CD8-positive, alpha-beta memory T cell (primary cell): ENCODE measurements at regions of chr6 and their contacts with region 1.

Region 1: GRCh38 chr6:47787620-47788497 is 6.0 kb downstream of the OPN5 start:
- DNase-seq: peak; percentile 20 to 62 (median 33)
- H3K4me3 ChIP-seq: no peak overlapping the region
- H3K4me3 Mint-ChIP-seq: peak overlapping the region in 3 of 7 donors; percentile 7 to 41 (median 18)
- H3K27ac ChIP-seq: no peak overlapping the region
- H3K27ac Mint-ChIP-seq: peak overlapping the region in 1 of 8 donors; percentile 8
- H3K4me1 ChIP-seq: peaks cover 6% of the 10 kb centered on the region
- H3K4me1 Mint-ChIP-seq: peaks cover 3 to 7% (median 6%) of the 10 kb centered on the region in 3 donors
- H3K27me3 ChIP-seq: no peaks in the 10 kb centered on the region
- H3K27me3 Mint-ChIP-seq: peaks cover 21 to 39% of the 10 kb centered on the region in 2 donors

Region 2: GRCh38 chr6:47669684-47670513 is 118.0 kb before region 1 on chr6:
- CTCF ChIA-PET with region 1: no interaction called
- POLR2A ChIA-PET with region 1: no interaction called
- DNase-seq: no peak
- H3K4me3 ChIP-seq: no peak overlapping the region
- H3K4me3 Mint-ChIP-seq: no peak overlapping the region
- H3K27ac ChIP-seq: no peak overlapping the region
- H3K27ac Mint-ChIP-seq: no peak overlapping the region
- H3K4me1 ChIP-seq: no peaks in the 10 kb centered on the region
- H3K4me1 Mint-ChIP-seq: no peaks in the 10 kb centered on the region
- H3K27me3 ChIP-seq: peaks cover 5% of the 10 kb centered on the region
- H3K27me3 Mint-ChIP-seq: peaks cover 23 to 45% of the 10 kb centered on the region in 2 donors

Region 3: DNA sequence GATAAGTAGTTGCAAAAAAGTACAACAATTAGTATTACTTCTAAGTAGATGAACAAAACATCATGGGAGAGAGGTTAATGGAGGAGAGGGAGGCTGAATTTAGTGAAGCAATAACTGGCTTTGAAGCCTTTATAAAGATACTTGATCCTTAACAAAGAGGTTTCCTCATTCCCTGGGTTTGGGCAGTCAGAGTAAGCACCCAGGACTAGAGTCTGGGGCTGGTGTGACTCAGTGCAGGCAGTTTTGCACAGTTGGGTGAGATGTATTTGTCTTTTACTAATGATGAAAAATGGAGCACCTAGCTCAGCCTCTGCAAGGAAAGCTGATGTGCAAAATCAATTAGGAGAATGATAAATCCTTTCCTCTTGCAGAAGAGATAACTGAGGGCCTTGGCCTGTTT is 17.9 kb before region 1 on chr6:
- CTCF ChIA-PET with region 1: no interaction called
- POLR2A ChIA-PET with region 1: no interaction called
- DNase-seq: no peak
- H3K4me3 ChIP-seq: no peak overlapping the region
- H3K4me3 Mint-ChIP-seq: no peak overlapping the region
- H3K27ac ChIP-seq: no peak overlapping the region
- H3K27ac Mint-ChIP-seq: no peak overlapping the region
- H3K4me1 ChIP-seq: no peaks in the 10 kb centered on the region
- H3K4me1 Mint-ChIP-seq: no peaks in the 10 kb centered on the region
- H3K27me3 ChIP-seq: no peaks in the 10 kb centered on the region
- H3K27me3 Mint-ChIP-seq: peaks cover 3 to 21% of the 10 kb centered on the region in 2 donors

Region 4: GRCh38 chr6:47804821-47805220 is 17.0 kb after region 1 on chr6:
- CTCF ChIA-PET with region 1: interaction called, 15 read pairs
- POLR2A ChIA-PET with region 1: no interaction called
- DNase-seq: no peak
- H3K4me3 ChIP-seq: no peak overlapping the region
- H3K4me3 Mint-ChIP-seq: no peak overlapping the region
- H3K27ac ChIP-seq: no peak overlapping the region
- H3K27ac Mint-ChIP-seq: no peak overlapping the region
- H3K4me1 ChIP-seq: no peaks in the 10 kb centered on the region
- H3K4me1 Mint-ChIP-seq: no peaks in the 10 kb centered on the region
- H3K27me3 ChIP-seq: no peaks in the 10 kb centered on the region
- H3K27me3 Mint-ChIP-seq: peaks cover 14 to 30% of the 10 kb centered on the region in 2 donors

Region 5: DNA sequence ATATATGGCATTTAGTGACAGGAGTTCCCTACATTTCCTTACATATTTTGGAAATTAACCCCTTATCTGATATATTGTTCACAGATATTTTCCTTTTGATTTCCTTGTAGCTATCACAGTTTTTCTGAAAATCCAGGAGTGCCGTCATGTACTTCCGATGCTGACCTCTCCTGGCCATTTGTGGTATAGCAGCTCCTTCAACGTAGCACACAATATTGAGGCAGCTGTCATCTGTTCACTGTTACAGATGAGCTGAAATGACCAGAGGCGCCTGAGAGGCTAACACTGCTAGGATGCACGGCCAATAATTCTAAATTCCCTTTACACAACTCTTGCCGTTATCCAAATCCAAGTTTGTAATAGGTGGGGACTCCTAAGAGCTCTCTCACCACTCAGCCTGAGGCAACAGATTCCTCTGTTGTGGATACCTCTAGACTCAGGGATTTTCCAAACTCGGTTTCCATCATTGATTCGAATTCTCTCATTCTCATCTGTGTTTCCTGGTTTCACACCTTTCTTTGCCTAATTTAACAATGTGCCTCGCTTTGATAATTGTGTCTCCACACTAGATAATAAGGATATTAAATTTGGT is 1622.2 kb after region 1 on chr6:
- CTCF ChIA-PET with region 1: interaction called, 13 read pairs
- POLR2A ChIA-PET with region 1: no interaction called
- DNase-seq: peak; percentile 4 to 58 (median 30)
- H3K4me3 ChIP-seq: no peak overlapping the region
- H3K4me3 Mint-ChIP-seq: no peak overlapping the region
- H3K27ac ChIP-seq: no peak overlapping the region
- H3K27ac Mint-ChIP-seq: no peak overlapping the region
- H3K4me1 ChIP-seq: no peaks in the 10 kb centered on the region
- H3K4me1 Mint-ChIP-seq: no peaks in the 10 kb centered on the region
- H3K27me3 ChIP-seq: peaks cover 3% of the 10 kb centered on the region
- H3K27me3 Mint-ChIP-seq: peaks cover 0 to 9% of the 10 kb centered on the region in 2 donors